A673 (cell line): ENCODE measurements at regions of chr12 and their contacts with region 1.

Region 1: GRCh38 chr12:54032627-54033100 is at the start of gene HOXC5:
- DNase-seq: peak; percentile 91
- H3K4me3 ChIP-seq: peak within 1 kb of the TSS; percentile 43
- H3K27ac ChIP-seq: no peak within 1 kb of the TSS
- H3K4me1 ChIP-seq: peaks cover 43% of the 10 kb centered on the region
- H3K27me3 ChIP-seq: no peaks in the 10 kb centered on the region
- CTCF ChIP-seq: peak; percentile 98
- total RNA-seq, gene HOXC5: 1.6 and 1.9 TPM in 2 replicates

Region 2: GRCh38 chr12:52776913-52777395 is 1255.7 kb before region 1 on chr12 and contains the start of gene KRT76:
- CTCF ChIA-PET with region 1: no interaction called
- POLR2A ChIA-PET with region 1: no interaction called
- intact Hi-C with region 1: no loop called
- DNase-seq: no peak
- H3K4me3 ChIP-seq: no peak within 1 kb of the TSS
- H3K27ac ChIP-seq: no peak within 1 kb of the TSS
- H3K4me1 ChIP-seq: no peaks in the 10 kb centered on the region
- H3K27me3 ChIP-seq: no peaks in the 10 kb centered on the region
- CTCF ChIP-seq: no peak
- total RNA-seq, gene KRT76: not detected in 2 replicates

Region 3: GRCh38 chr12:54017878-54018467 is 14.7 kb before region 1 on chr12:
- CTCF ChIA-PET with region 1: interaction called, 21 read pairs
- POLR2A ChIA-PET with region 1: no interaction called
- intact Hi-C with region 1: no loop called
- DNase-seq: peak; percentile 99
- H3K4me3 ChIP-seq: peak overlapping the region; percentile 68
- H3K27ac ChIP-seq: peak overlapping the region; percentile 97
- H3K4me1 ChIP-seq: peaks cover 59% of the 10 kb centered on the region
- H3K27me3 ChIP-seq: no peaks in the 10 kb centered on the region
- CTCF ChIP-seq: no peak

Region 4: GRCh38 chr12:54126029-54126695 is 93.5 kb after region 1 on chr12:
- CTCF ChIA-PET with region 1: interaction called, 13 read pairs
- POLR2A ChIA-PET with region 1: no interaction called
- intact Hi-C with region 1: no loop called
- DNase-seq: no peak
- H3K4me3 ChIP-seq: peak overlapping the region; percentile 49
- H3K27ac ChIP-seq: peak overlapping the region; percentile 51
- H3K4me1 ChIP-seq: peaks cover 19% of the 10 kb centered on the region
- H3K27me3 ChIP-seq: no peaks in the 10 kb centered on the region
- CTCF ChIP-seq: no peak

Region 5: DNA sequence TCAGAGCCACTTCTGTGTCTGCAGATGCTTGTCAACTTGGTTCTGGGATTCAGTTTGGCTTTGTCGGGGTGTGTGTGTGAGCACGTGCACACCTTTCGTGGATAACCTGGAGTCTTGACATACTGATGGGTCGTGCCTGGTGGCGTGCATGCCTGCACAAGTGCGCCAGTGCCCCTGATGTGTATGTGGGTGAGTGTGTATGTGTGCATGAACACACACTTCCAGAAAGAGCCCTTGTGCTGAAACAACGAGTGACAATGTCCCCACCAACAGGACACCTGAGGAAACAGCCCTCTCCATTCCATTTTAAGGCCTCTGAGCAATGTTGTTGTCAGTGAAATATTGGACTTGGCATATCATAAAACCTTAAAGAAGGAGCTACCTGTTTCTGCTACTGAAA is 102.2 kb after region 1 on chr12:
- CTCF ChIA-PET with region 1: interaction called, 9 read pairs
- POLR2A ChIA-PET with region 1: no interaction called
- intact Hi-C with region 1: loop called (anchors 5 kb)
- DNase-seq: no peak
- H3K4me3 ChIP-seq: no peak overlapping the region
- H3K27ac ChIP-seq: no peak overlapping the region
- H3K4me1 ChIP-seq: peaks cover 4% of the 10 kb centered on the region
- H3K27me3 ChIP-seq: no peaks in the 10 kb centered on the region
- CTCF ChIP-seq: peak; percentile 56

Region 6: DNA sequence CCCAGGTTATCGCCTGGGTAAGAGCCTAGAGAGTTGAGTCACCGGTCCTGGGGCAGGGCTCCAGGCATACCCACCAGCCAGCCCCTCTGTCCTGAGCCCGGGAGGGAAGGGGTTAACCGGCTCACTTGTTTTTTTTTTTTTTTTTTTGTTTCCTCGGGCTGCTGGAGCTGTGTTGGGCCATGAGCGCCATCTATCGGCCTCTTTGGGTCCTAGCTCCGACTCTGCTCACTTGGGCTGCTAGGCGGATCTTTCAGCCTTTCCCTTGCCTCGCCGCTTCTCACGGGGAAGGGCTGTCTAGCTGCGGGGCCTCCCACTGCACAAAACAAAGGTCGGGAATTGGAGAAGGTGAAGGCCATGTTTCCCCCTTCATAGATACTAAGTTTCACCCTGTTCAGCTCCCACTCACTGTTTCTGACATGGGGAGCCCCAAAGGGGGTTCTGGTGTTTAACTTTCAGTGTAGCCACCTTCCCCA is 158.9 kb after region 1 on chr12:
- CTCF ChIA-PET with region 1: interaction called, 22 read pairs
- POLR2A ChIA-PET with region 1: no interaction called
- intact Hi-C with region 1: loop called (anchors 2 kb)
- DNase-seq: peak; percentile 91
- H3K4me3 ChIP-seq: no peak overlapping the region
- H3K27ac ChIP-seq: no peak overlapping the region
- H3K4me1 ChIP-seq: peaks cover 34% of the 10 kb centered on the region
- H3K27me3 ChIP-seq: no peaks in the 10 kb centered on the region
- CTCF ChIP-seq: peak; percentile 91

Region 7: GRCh38 chr12:54201001-54201794 is 168.5 kb after region 1 on chr12:
- CTCF ChIA-PET with region 1: interaction called, 16 read pairs
- POLR2A ChIA-PET with region 1: no interaction called
- intact Hi-C with region 1: no loop called
- DNase-seq: peak; percentile 86
- H3K4me3 ChIP-seq: no peak overlapping the region
- H3K27ac ChIP-seq: no peak overlapping the region
- H3K4me1 ChIP-seq: peaks cover 16% of the 10 kb centered on the region
- H3K27me3 ChIP-seq: no peaks in the 10 kb centered on the region
- CTCF ChIP-seq: peak; percentile 97